ENCODE measurements at regions of chr10 and their contacts with region 1.

Region 1: DNA sequence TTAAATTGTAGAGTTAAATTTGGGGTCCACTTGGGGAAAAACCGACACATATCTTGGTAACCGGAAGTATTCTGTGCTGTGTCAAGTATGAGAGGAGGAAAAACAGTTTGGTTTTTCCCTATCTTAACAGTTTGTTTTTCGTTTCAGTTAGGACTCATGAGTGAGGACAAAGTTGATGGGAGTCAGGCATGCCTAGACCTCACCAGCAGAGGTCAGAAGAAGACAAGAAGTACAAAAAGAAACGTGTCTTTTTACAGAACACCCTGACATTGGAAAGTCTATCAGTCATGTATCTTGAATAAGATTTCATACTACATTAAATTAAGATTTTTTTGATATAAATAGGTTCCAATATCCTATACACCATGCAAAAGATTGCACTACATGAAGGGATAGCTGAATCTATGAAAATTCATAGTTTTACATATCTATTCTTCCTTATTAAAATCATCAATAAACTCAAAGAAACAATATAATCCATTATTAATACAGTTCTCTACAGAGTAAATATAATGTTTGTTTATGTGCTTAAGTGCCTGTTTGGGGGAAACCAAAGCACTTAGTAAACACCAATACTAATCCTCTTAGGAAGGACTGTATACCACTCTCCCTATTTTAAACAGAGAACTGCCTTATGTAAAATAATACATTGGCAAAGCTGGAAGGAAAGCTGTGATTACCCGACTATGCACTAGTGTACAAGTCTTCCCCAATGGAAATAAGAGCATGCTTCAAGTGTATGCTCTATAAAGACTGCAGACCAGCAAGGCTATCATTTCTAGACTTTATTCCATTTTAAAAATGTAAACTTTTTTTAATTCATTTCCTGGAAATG is 95.6 kb downstream of the USP6NL start:
- DNase-seq: peak; percentile 68
- ATAC-seq: peak; percentile 82
- H3K4me3 ChIP-seq: no peak overlapping the region
- H3K27ac ChIP-seq: no peak overlapping the region
- H3K4me1 ChIP-seq: peaks cover 6% of the 10 kb centered on the region; the same call in 1 of the 2 replicates
- H3K27me3 ChIP-seq: no peaks in the 10 kb centered on the region
- CTCF ChIP-seq: peak; percentile 85
- EP300 ChIP-seq: no peak
- POLR2A ChIP-seq: no peak
- RAD21 ChIP-seq: peak; percentile 84

Region 2: GRCh38 chr10:11602919-11603523 is 87.2 kb after region 1 on chr10:
- CTCF ChIA-PET with region 1: no interaction called
- POLR2A ChIA-PET with region 1: no interaction called
- in situ Hi-C with region 1: loop called (anchors 5 kb)
- intact Hi-C with region 1: no loop called
- DNase-seq: peak; percentile 91
- ATAC-seq: peak; percentile 76
- H3K4me3 ChIP-seq: peak overlapping the region; percentile 2 to 36 (median 20); a peak in 3 of 6 replicates
- H3K27ac ChIP-seq: peak overlapping the region; percentile 72
- H3K4me1 ChIP-seq: peaks cover 92% of the 10 kb centered on the region
- H3K27me3 ChIP-seq: no peaks in the 10 kb centered on the region
- CTCF ChIP-seq: no peak
- EP300 ChIP-seq: peak; percentile 29 to 90; a peak in 3 of 4 replicates
- POLR2A ChIP-seq: no peak
- RAD21 ChIP-seq: no peak

Region 3: DNA sequence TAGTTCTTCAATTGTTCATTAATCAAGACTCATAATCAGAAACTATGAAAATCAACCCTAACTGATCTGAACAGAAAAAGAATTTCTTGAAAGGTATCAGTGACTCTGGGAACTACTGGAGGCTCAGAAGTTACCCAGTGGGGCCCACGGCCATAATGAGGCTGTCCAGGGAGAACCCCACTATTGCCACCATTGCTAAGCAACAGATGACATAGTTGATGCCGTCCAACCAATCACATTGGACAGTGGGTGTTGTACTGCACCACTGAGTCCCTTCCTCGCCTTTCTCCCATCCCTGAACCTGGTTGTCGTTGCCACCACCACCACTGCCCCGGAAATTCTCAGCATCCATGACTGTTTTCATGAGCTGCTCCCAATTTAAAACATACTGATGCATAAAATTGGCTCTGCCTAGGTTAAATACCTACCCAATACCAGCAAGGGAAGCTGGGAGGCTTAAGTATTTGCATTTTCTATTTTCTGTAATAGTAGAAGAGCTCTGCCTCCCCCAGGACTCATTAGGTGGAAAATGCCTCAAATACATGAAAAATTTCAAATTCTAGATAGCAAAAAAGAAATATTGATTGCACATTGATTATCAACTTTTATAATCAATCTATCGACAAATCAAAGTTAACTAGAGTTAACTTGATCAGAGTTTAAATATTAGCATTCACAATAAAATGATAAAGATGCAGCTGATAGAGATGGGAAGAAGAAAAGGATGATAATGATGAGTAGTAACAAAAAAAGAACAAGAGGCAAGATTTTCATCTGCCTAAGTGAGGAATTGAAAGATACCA is 122.4 kb after region 1 on chr10:
- CTCF ChIA-PET with region 1: no interaction called
- POLR2A ChIA-PET with region 1: no interaction called
- in situ Hi-C with region 1: no loop called
- intact Hi-C with region 1: no loop called
- DNase-seq: no peak
- ATAC-seq: no peak
- H3K4me3 ChIP-seq: no peak overlapping the region
- H3K27ac ChIP-seq: no peak overlapping the region
- H3K4me1 ChIP-seq: peaks cover 18% of the 10 kb centered on the region
- H3K27me3 ChIP-seq: peaks cover 2 to 16% of the 10 kb centered on the region in 2 experiments; a peak in 3 of 5 replicates
- CTCF ChIP-seq: no peak
- EP300 ChIP-seq: no peak
- POLR2A ChIP-seq: no peak
- RAD21 ChIP-seq: no peak

Region 4: GRCh38 chr10:11698691-11699549 is 183.1 kb after region 1 on chr10:
- CTCF ChIA-PET with region 1: no interaction called
- POLR2A ChIA-PET with region 1: no interaction called
- in situ Hi-C with region 1: no loop called
- intact Hi-C with region 1: loop called (anchors 1 kb)
- DNase-seq: peak; percentile 61
- ATAC-seq: peak; percentile 60
- H3K4me3 ChIP-seq: peak overlapping the region; percentile 2 to 34 (median 33); a peak in 4 of 6 replicates
- H3K27ac ChIP-seq: peak overlapping the region; percentile 83
- H3K4me1 ChIP-seq: peaks cover 72% of the 10 kb centered on the region
- H3K27me3 ChIP-seq: no peaks in the 10 kb centered on the region
- CTCF ChIP-seq: no peak
- EP300 ChIP-seq: peak in 1 of 2 experiments; percentile 68; a peak in 2 of 4 replicates
- POLR2A ChIP-seq: no peak
- RAD21 ChIP-seq: no peak

Region 5: GRCh38 chr10:11724938-11725776 is 209.3 kb after region 1 on chr10:
- CTCF ChIA-PET with region 1: interaction called, 21 read pairs
- POLR2A ChIA-PET with region 1: no interaction called
- in situ Hi-C with region 1: loop called (anchors 10 kb)
- intact Hi-C with region 1: loop called (anchors 1 kb)
- DNase-seq: peak; percentile 80
- ATAC-seq: peak; percentile 96
- H3K4me3 ChIP-seq: peak overlapping the region; percentile 25 to 46 (median 31); a peak in 3 of 6 replicates
- H3K27ac ChIP-seq: no peak overlapping the region
- H3K4me1 ChIP-seq: peaks cover 45% of the 10 kb centered on the region
- H3K27me3 ChIP-seq: no peaks in the 10 kb centered on the region
- CTCF ChIP-seq: peak; percentile 90
- EP300 ChIP-seq: no peak
- POLR2A ChIP-seq: no peak
- RAD21 ChIP-seq: peak; percentile 86

Region 6: DNA sequence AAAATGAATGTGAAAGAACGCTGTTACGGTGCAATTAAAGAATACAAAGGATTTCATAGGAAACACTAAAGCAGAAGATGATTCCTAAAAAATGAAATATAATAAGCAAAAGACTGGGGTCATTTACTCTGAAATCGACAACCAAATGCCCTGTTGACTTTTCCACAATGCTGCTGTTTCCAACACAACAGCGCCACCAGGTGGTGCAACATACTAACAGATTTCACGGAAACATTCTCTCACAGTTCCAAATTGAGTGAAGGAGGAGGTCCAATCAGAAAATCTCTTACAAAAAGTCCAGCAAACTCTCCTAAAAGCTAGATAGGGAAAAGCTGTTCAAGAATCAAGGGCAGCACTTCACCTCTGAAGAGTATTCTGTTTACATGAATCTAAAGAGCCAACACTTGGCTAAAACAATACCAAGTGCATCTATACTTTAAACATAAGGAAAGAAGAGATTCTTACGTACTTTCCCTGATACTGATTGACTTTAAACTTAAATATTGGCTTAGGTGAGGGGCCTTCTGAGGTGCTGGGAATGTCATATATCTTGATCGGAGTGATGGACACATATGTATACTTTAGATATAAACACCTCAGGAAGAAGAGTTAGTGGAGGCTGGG is 470.9 kb after region 1 on chr10:
- CTCF ChIA-PET with region 1: no interaction called
- POLR2A ChIA-PET with region 1: no interaction called
- in situ Hi-C with region 1: loop called (anchors 25 kb)
- intact Hi-C with region 1: no loop called
- DNase-seq: peak; percentile 83
- ATAC-seq: peak; percentile 87
- H3K4me3 ChIP-seq: peak overlapping the region in 1 of 3 experiments; percentile 29; a peak in 2 of 6 replicates
- H3K27ac ChIP-seq: peak overlapping the region; percentile 60
- H3K4me1 ChIP-seq: peaks cover 15% of the 10 kb centered on the region
- H3K27me3 ChIP-seq: no peaks in the 10 kb centered on the region
- CTCF ChIP-seq: peak; percentile 89
- EP300 ChIP-seq: peak in 1 of 2 experiments; percentile 31; a peak in 2 of 4 replicates
- POLR2A ChIP-seq: no peak
- RAD21 ChIP-seq: peak; percentile 88

Measured in HepG2 (cell line).